ENCODE measurements at regions of chrX and their contacts with region 1.

Region 1: GRCh38 chrX:105701084-105702055 is 121.0 kb upstream of the NRK start:
- DNase-seq: peak; percentile 35 to 88
- H3K4me3 ChIP-seq: no peak overlapping the region
- H3K27ac ChIP-seq: no peak overlapping the region
- H3K4me1 ChIP-seq: peaks cover 44% of the 10 kb centered on the region
- H3K27me3 ChIP-seq: no peaks in the 10 kb centered on the region
- CTCF ChIP-seq: peak; percentile 56

Region 2: GRCh38 chrX:104165894-104166737 is 1535.3 kb before region 1 on chrX and contains the start of gene FAM199X:
- CTCF ChIA-PET with region 1: interaction called, 10 read pairs
- POLR2A ChIA-PET with region 1: no interaction called
- intact Hi-C with region 1: no loop called
- DNase-seq: peak; percentile 79 to 89
- H3K4me3 ChIP-seq: peak within 1 kb of the TSS; percentile 69
- H3K27ac ChIP-seq: peak within 1 kb of the TSS; percentile 33
- H3K4me1 ChIP-seq: peaks cover 18% of the 10 kb centered on the region
- H3K27me3 ChIP-seq: no peaks in the 10 kb centered on the region
- CTCF ChIP-seq: peak; percentile 70
- total RNA-seq, gene FAM199X: 28.5 and 35.7 TPM in 2 replicates

Region 3: DNA sequence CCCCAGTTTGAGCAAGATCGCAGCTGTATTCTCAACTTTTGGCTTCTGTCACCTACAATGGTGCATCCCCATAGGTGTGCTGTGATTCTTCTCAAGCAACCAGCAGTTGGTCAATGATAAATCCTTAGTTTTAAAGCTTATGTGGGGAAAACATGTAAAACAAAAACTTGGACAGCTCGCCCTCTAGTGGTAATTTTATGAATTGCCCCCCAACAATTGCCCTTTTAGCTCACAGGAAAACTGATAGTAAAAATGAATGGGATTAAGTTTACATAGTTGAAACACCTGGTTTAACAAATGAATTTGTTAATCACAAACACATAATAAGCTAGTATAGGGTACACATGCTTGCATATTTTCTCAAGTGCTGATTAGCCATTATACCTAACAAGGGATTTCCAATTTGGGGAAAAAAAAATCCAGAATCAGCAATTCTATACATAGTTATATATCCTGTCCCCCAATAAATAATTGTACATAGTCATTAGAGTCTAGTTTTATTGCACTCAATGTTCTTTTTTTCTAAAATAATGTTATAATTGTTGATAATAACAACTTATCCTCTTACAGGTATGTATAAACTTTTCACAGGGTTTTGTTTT is 511.0 kb before region 1 on chrX:
- CTCF ChIA-PET with region 1: no interaction called
- POLR2A ChIA-PET with region 1: no interaction called
- intact Hi-C with region 1: loop called (anchors 2 kb)
- DNase-seq: peak in 1 of 2 experiments; percentile 39
- H3K4me3 ChIP-seq: no peak overlapping the region
- H3K27ac ChIP-seq: no peak overlapping the region
- H3K4me1 ChIP-seq: no peaks in the 10 kb centered on the region
- H3K27me3 ChIP-seq: no peaks in the 10 kb centered on the region
- CTCF ChIP-seq: peak; percentile 80

Region 4: DNA sequence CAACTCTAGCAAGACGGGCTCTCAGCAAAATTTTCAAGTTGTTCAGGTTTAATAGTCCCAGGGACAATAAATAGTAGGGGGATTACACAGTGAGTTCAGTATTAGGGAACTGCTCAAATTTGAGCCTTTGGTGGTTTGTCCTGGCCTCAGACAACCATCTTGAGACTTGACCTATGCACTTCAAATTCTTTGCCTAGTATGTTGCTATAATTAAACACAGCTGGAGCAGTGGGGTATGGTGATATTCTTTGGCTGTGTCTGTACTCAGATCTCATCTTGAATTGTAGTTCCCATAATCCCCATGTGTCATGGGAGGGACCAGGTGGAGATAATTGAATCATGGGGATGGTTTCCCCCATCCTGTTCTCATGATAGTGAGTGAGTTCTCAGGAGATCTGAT is 437.6 kb before region 1 on chrX:
- CTCF ChIA-PET with region 1: no interaction called
- POLR2A ChIA-PET with region 1: no interaction called
- intact Hi-C with region 1: loop called (anchors 1 kb)
- DNase-seq: no peak
- H3K4me3 ChIP-seq: no peak overlapping the region
- H3K27ac ChIP-seq: no peak overlapping the region
- H3K4me1 ChIP-seq: peaks cover 8% of the 10 kb centered on the region
- H3K27me3 ChIP-seq: no peaks in the 10 kb centered on the region
- CTCF ChIP-seq: no peak

Region 5: GRCh38 chrX:105314466-105314865 is 386.9 kb before region 1 on chrX:
- CTCF ChIA-PET with region 1: no interaction called
- POLR2A ChIA-PET with region 1: interaction called, 4 read pairs
- intact Hi-C with region 1: loop called (anchors 2 kb)
- DNase-seq: peak; percentile 14 to 91
- H3K4me3 ChIP-seq: peak overlapping the region; percentile 57
- H3K27ac ChIP-seq: peak overlapping the region; percentile 98
- H3K4me1 ChIP-seq: peaks cover 39% of the 10 kb centered on the region
- H3K27me3 ChIP-seq: no peaks in the 10 kb centered on the region
- CTCF ChIP-seq: no peak

Region 6: GRCh38 chrX:105645667-105646357 is 55.6 kb before region 1 on chrX:
- CTCF ChIA-PET with region 1: no interaction called
- POLR2A ChIA-PET with region 1: no interaction called
- intact Hi-C with region 1: no loop called
- DNase-seq: no peak
- H3K4me3 ChIP-seq: no peak overlapping the region
- H3K27ac ChIP-seq: no peak overlapping the region
- H3K4me1 ChIP-seq: no peaks in the 10 kb centered on the region
- H3K27me3 ChIP-seq: no peaks in the 10 kb centered on the region
- CTCF ChIP-seq: no peak

Region 7: GRCh38 chrX:105752338-105752956 is 51.1 kb after region 1 on chrX:
- CTCF ChIA-PET with region 1: no interaction called
- POLR2A ChIA-PET with region 1: no interaction called
- intact Hi-C with region 1: loop called (anchors 10 kb)
- DNase-seq: peak in 1 of 2 experiments; percentile 23
- H3K4me3 ChIP-seq: no peak overlapping the region
- H3K27ac ChIP-seq: 0 out of 2 replicates have a peak overlapping the region, but pooled peaks have one; percentile 14
- H3K4me1 ChIP-seq: peaks cover 6% of the 10 kb centered on the region; the same call in 1 of the 2 replicates
- H3K27me3 ChIP-seq: no peaks in the 10 kb centered on the region
- CTCF ChIP-seq: no peak

Measured in PC-9 (cell line).